ENCODE measurements at regions of chr6 and their contacts with region 1.

Region 1: GRCh38 chr6:163943607-163944385 is 529.3 kb downstream of the QKI start:
- DNase-seq: peak in 4 of 5 donors; percentile 55 to 72 (median 65)
- ATAC-seq: peak; percentile 71 to 80 (median 74)
- H3K4me3 ChIP-seq: peak overlapping the region in 1 of 12 donors; percentile 32
- H3K27ac ChIP-seq: peak overlapping the region in 10 of 12 donors; percentile 12 to 71 (median 42)
- H3K4me1 ChIP-seq: peaks cover 8 to 39% (median 27%) of the 10 kb centered on the region in 12 donors
- H3K27me3 ChIP-seq: no peaks in the 10 kb centered on the region
- CTCF ChIP-seq: no peak
- POLR2A ChIP-seq: no peak

Region 2: DNA sequence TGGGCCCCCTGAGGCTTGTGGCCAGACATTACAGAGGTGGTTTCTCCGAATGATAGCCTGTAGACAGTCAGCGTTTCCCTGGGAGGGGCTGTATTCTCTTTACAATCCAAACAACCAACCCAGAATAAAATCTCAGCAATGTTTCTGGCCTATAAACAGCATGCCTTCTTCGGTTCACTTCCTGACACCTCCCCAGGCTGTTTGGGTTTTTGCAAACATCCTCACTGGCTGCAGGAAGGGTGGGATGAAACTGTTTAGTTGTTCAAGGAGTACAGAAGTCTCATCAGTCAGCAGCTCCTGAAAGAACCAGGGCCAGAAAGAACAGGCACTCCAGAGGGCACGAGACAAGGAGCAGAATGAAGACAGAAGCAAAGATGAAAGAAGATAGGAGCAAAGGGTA is 179.2 kb before region 1 on chr6:
- intact Hi-C with region 1: loop called in 2 of 10 experiments (anchors 5 kb)
- DNase-seq: no peak
- ATAC-seq: peak; percentile 50 to 79 (median 74)
- H3K4me3 ChIP-seq: no peak overlapping the region
- H3K27ac ChIP-seq: peak overlapping the region in 10 of 12 donors; percentile 19 to 72 (median 54)
- H3K4me1 ChIP-seq: peaks cover 0 to 26% (median 15%) of the 10 kb centered on the region in 12 donors
- H3K27me3 ChIP-seq: no peaks in the 10 kb centered on the region
- CTCF ChIP-seq: no peak
- POLR2A ChIP-seq: no peak

Region 3: GRCh38 chr6:164477101-164477500 is 533.3 kb after region 1 on chr6:
- intact Hi-C with region 1: no loop called
- DNase-seq: no peak
- ATAC-seq: no peak
- H3K4me3 ChIP-seq: no peak overlapping the region
- H3K27ac ChIP-seq: no peak overlapping the region
- H3K4me1 ChIP-seq: no peaks in the 10 kb centered on the region
- H3K27me3 ChIP-seq: no peaks in the 10 kb centered on the region
- CTCF ChIP-seq: no peak
- POLR2A ChIP-seq: no peak